ENCODE measurements at regions of chr12 and their contacts with region 1.

Region 1: DNA sequence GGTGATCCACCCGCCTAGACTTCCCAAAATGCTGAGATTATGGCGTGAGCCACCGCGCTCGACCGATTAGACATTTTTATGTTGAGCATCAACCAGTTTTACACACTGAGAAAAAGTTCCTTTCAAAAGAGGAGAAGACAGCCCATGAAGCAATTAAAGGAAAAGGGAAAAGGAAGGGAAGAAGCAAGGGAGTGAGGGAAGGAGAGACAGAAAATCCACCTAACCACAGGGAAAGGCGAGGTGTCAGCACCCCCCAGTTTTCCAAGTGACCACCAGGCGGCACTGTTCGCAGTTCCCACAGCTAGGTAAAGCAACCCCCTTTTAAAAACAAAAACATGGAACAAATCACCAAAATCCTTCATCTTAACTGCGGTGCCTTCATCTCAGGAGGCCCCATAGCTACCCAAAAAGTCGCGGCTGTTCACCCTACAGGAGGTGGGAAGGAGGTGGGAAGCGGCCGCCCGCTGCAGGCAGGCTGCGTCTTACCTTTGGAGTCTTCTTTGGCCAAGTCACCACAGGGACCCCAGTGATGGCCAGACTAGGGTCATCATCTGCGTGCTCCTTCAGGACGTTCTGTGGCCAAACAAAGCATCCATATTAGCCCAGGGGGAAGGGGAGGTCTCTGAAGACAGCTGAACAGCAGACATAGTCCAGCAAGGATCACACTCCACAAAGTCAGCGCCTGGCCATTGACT is 86.6 kb downstream of the KDM2B start:
- DNase-seq: no peak
- H3K4me3 ChIP-seq: no peak overlapping the region
- H3K27ac ChIP-seq: no peak overlapping the region
- H3K4me1 ChIP-seq: no peaks in the 10 kb centered on the region
- H3K27me3 ChIP-seq: no peaks in the 10 kb centered on the region
- CTCF ChIP-seq: peak; percentile 68 to 80

Region 2: GRCh38 chr12:121223292-121224285 is 270.7 kb before region 1 on chr12:
- CTCF ChIA-PET with region 1: no interaction called
- dilution Hi-C with region 1: no loop called
- in situ Hi-C with region 1: no loop called
- intact Hi-C with region 1: no loop called
- DNase-seq: peak; percentile 12
- H3K4me3 ChIP-seq: no peak overlapping the region
- H3K27ac ChIP-seq: no peak overlapping the region
- H3K4me1 ChIP-seq: no peaks in the 10 kb centered on the region
- H3K27me3 ChIP-seq: no peaks in the 10 kb centered on the region
- CTCF ChIP-seq: peak; percentile 33 to 66

Region 3: DNA sequence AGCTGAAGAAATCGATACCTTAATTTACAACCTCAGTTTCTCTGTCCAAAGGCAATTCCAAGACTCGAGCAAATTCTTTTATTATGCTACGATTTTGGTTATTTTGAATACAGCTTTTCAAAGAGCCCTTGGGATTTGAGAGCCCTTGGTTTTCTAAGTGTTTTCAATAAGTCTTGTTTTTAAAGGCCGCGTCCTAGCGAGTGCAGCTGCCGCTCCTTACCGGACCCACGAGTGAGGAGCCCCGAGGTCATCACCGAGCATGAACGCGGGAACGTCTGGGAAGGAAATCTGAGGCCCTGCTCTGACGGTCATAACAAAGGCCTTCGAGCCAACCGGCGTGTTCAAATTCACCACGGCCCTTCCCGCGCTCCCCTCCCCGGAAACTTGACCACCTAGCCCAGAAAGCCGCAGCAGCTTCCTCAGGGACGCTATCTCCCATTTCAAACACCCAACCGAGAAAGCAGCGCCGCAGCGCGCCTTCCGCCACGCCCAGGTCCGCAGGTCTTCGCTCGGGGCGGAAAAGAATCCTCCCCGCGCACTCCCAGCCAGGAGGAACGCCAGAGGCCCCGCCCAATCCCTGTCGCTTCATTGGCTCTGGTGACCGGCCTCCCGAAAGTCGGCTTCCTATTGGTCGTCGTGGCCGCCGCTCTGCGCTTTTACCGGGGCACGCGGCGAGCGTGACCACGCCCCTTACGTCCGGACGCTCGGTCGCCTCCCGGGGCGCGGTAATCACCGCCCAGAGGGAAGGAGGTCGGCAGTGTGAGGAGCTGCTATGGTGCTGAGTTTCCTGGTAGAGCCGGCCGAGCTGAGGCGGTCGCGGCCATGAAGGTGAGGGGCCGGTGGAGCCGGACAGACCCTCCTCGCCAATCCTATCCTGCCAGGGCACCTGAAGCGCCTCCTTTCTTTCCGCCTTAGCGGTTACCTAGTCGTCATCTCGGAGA is 94.6 kb before region 1 on chr12 and contains the start of gene RNF34:
- CTCF ChIA-PET with region 1: no interaction called
- dilution Hi-C with region 1: no loop called
- in situ Hi-C with region 1: no loop called
- intact Hi-C with region 1: no loop called
- DNase-seq: peak; percentile 99
- H3K4me3 ChIP-seq: peak within 1 kb of the TSS; percentile 71 to 86 (median 83)
- H3K27ac ChIP-seq: peak within 1 kb of the TSS; percentile 77
- H3K4me1 ChIP-seq: peaks cover 10% of the 10 kb centered on the region
- H3K27me3 ChIP-seq: no peaks in the 10 kb centered on the region
- CTCF ChIP-seq: no peak
- total RNA-seq, gene RNF34: 49.5 to 56.8 TPM

Region 4: GRCh38 chr12:121668750-121669520 is 174.7 kb after region 1 on chr12:
- CTCF ChIA-PET with region 1: no interaction called
- dilution Hi-C with region 1: no loop called
- in situ Hi-C with region 1: loop called in 1 of 2 experiments (anchors 5 kb)
- intact Hi-C with region 1: no loop called
- DNase-seq: no peak
- H3K4me3 ChIP-seq: no peak overlapping the region
- H3K27ac ChIP-seq: no peak overlapping the region
- H3K4me1 ChIP-seq: peaks cover 14% of the 10 kb centered on the region
- H3K27me3 ChIP-seq: no peaks in the 10 kb centered on the region
- CTCF ChIP-seq: peak; percentile 42 to 51

Region 5: DNA sequence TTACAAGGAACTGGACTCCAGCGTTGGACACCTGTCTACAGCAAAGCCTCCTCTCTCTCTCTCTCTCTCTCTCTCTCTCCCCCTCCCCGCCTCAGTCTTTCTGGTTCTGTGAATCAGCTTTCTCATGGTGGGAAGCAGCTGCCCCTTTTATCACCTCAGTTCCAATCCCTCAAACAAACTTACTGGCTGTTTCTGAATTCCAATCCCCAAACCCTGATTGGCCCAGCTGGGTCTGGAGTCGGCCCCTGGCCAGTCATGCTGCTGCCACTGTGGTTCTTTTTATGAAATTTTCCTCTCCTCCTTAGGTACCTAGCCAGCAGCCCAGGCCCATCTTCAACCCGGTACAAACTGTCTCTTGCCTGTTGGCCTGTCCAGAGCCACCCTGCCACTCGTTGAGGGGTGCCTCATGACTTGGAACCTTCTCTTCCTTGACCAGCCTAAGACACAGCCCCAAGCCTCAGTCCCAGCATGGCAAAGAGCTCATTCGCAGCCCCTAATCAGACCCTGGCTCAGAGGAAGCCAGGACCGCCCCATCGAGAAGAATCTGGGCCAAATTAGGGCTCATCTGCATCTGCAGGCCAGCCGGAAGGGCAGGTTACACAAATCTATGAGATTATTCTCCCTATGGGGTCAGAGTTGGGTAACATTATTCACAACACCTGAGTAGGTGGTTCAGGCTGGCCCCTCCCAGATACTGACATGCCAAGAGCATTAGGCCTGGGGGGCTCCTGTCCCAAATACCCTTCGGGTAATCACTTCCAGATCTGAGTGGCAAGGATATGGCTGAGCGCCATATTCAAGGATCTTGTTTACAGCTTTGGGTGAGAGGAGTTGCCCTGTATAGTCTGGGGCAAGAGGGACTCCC is 184.7 kb after region 1 on chr12:
- CTCF ChIA-PET with region 1: no interaction called
- dilution Hi-C with region 1: no loop called
- in situ Hi-C with region 1: loop called in 1 of 2 experiments (anchors 5 kb)
- intact Hi-C with region 1: loop called (anchors 1 kb)
- DNase-seq: no peak
- H3K4me3 ChIP-seq: no peak overlapping the region
- H3K27ac ChIP-seq: no peak overlapping the region
- H3K4me1 ChIP-seq: no peaks in the 10 kb centered on the region
- H3K27me3 ChIP-seq: no peaks in the 10 kb centered on the region
- CTCF ChIP-seq: no peak

Region 6: DNA sequence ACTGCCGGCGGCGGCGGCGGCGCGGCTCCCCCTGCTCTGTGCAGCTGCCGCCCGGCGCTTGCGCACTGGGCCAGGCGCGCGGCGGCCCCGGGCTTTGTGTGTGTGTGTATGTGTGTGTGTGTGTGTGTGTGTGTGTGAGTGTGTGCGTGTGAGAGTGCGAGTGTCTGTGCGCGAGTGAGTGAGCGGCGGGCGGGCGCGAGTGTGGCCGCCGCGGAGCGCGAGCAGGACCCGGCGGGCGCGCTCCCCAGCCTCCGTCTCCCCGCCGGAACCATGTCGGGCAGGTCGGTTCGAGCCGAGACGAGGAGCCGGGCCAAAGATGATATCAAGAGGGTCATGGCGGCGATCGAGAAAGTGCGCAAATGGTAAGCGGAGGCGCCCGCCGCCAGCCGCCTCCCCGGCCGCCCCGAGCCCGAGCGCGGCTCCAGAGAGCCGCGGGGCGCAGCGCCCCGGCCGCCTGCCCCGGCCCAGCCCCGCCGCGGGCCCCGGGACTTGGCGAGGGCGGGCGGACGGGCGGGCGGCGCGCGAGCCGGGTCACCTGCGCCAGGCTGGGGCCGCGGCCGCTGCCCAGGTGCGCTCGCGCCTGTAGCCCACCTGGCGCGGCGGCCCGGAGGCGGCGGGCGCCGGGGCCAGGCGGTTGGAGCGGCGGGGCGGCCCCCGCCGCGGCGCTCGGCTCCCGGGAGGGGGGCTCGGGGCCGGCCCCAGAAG is 527.7 kb after region 1 on chr12 and contains the start of gene BCL7A:
- CTCF ChIA-PET with region 1: no interaction called
- dilution Hi-C with region 1: no loop called
- in situ Hi-C with region 1: no loop called
- intact Hi-C with region 1: no loop called
- DNase-seq: peak; percentile 81
- H3K4me3 ChIP-seq: peak within 1 kb of the TSS; percentile 66 to 80 (median 72)
- H3K27ac ChIP-seq: peak within 1 kb of the TSS; percentile 77
- H3K4me1 ChIP-seq: peaks cover 30% of the 10 kb centered on the region
- H3K27me3 ChIP-seq: no peaks in the 10 kb centered on the region
- CTCF ChIP-seq: no peak
- total RNA-seq, gene BCL7A: 15.8 to 27.7 TPM